Endothelial cell of umbilical vein (primary cell): ENCODE measurements at regions of chr6 and their contacts with region 1.

Region 1: GRCh38 chr6:144582939-144583613 is 297.9 kb downstream of the UTRN start:
- DNase-seq: no peak
- H3K4me3 ChIP-seq: no peak overlapping the region
- H3K27ac ChIP-seq: no peak overlapping the region
- H3K4me1 ChIP-seq: peaks cover 7% of the 10 kb centered on the region
- H3K27me3 ChIP-seq: no peaks in the 10 kb centered on the region
- CTCF ChIP-seq: no peak
- POLR2A ChIP-seq: no peak

Region 2: GRCh38 chr6:144845186-144845585 is 262.1 kb after region 1 on chr6:
- CTCF ChIA-PET with region 1: no interaction called
- POLR2A ChIA-PET with region 1: no interaction called
- dilution Hi-C with region 1: no loop called
- intact Hi-C with region 1: loop called (anchors 10 kb)
- DNase-seq: no peak
- H3K4me3 ChIP-seq: no peak overlapping the region
- H3K27ac ChIP-seq: no peak overlapping the region
- H3K4me1 ChIP-seq: no peaks in the 10 kb centered on the region
- H3K27me3 ChIP-seq: no peaks in the 10 kb centered on the region
- CTCF ChIP-seq: no peak
- POLR2A ChIP-seq: no peak

Region 3: DNA sequence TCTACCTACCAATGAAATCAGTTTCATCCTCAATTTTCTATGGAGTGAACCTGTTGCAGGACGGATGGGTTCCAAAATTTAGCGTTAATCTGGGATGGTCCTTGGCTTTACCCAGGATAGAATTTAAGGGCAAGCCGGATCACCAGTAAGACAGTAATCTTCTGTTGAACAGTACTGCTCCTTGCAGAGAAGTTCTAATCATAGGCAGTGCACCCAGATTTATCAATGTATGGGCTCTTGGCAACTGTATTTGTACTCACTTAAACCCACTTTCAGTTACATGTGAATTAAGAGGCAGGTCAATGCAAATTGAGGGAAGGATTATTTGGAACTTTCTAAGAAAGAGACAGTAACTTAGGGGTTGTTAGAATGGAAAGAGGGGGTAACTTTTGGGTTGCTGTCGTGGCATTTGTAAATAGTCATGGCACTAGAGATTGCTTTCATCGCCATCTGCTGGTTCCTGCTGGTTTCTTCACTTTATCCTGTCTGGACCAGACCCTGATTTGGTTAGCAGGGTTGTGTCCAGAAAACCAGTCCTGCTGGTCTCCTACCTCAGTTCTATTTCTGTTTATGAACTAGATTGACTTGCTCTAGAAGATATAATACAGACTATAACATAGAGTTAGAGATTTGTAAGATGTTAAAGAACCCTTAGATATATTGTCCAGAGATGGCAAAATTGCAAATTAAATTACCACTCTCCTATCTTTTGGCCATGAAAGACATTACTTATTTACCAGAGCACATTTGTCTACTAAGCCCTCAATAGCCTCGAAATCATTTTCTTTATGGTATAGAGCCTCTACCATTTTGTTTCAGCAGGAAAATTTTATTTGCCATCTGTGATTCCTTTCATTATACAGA is 348.3 kb after region 1 on chr6:
- CTCF ChIA-PET with region 1: interaction called, 15 read pairs
- POLR2A ChIA-PET with region 1: no interaction called
- dilution Hi-C with region 1: no loop called
- intact Hi-C with region 1: loop called (anchors 1 kb)
- DNase-seq: peak; percentile 34
- H3K4me3 ChIP-seq: no peak overlapping the region
- H3K27ac ChIP-seq: no peak overlapping the region
- H3K4me1 ChIP-seq: no peaks in the 10 kb centered on the region
- H3K27me3 ChIP-seq: no peaks in the 10 kb centered on the region
- CTCF ChIP-seq: peak; percentile 47 to 68
- POLR2A ChIP-seq: no peak

Region 4: DNA sequence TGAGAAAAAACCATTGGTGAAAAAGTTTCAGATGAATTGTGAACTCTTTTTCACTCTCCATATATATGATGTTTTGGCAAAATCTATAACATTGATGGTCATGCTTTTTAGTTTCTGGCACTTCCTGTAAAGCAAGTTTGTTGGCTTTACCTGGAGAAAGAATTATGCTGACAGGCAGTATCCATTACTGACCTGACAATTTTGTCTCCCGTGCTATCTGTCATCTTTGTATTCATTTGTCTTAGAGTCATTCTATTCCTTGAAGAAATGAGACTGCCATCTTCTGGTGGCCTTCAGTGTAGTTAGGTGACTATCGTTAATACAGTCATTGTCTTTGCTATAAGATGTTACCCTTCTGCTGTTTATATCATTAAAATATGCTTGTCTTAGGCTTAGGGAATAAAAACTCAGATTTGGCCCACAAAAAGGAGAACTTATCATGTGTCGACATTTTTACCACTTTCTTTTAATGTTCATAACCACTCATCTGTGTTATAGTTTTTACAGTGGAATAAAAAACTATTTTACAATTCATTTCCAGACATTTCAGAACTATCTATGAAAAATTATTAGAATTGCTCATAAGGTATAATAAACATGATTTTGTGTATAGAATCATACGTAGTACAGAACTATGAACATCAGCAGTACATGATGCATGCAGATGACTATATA is 445.2 kb after region 1 on chr6:
- CTCF ChIA-PET with region 1: interaction called, 5 read pairs
- POLR2A ChIA-PET with region 1: no interaction called
- dilution Hi-C with region 1: no loop called
- intact Hi-C with region 1: loop called (anchors 1 kb)
- DNase-seq: peak; percentile 59
- H3K4me3 ChIP-seq: no peak overlapping the region
- H3K27ac ChIP-seq: no peak overlapping the region
- H3K4me1 ChIP-seq: peaks cover 6% of the 10 kb centered on the region
- H3K27me3 ChIP-seq: no peaks in the 10 kb centered on the region
- CTCF ChIP-seq: peak; percentile 25 to 40
- POLR2A ChIP-seq: no peak

Region 5: DNA sequence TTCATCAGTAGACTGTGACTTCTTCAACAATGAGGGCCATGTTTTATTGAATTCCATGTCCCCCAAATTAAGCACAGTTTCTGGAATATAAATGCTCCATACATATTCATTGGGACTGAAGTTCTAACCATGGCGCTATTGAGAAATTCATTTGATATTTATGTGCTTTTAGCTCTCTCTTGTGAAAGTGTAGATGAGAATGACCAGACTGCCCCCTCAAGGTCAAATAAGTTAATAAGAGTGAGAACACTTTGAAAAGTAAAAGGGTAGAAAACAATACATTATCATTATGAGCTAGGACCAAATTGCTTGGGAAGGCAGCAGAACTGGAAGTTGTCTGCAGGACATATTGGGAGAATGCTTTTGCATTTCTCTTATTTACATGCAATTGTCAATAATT is 554.4 kb after region 1 on chr6:
- CTCF ChIA-PET with region 1: interaction called, 28 read pairs
- POLR2A ChIA-PET with region 1: no interaction called
- dilution Hi-C with region 1: no loop called
- intact Hi-C with region 1: loop called (anchors 10 kb)
- DNase-seq: peak; percentile 29
- H3K4me3 ChIP-seq: no peak overlapping the region
- H3K27ac ChIP-seq: no peak overlapping the region
- H3K4me1 ChIP-seq: no peaks in the 10 kb centered on the region
- H3K27me3 ChIP-seq: no peaks in the 10 kb centered on the region
- CTCF ChIP-seq: no peak
- POLR2A ChIP-seq: no peak

Region 6: DNA sequence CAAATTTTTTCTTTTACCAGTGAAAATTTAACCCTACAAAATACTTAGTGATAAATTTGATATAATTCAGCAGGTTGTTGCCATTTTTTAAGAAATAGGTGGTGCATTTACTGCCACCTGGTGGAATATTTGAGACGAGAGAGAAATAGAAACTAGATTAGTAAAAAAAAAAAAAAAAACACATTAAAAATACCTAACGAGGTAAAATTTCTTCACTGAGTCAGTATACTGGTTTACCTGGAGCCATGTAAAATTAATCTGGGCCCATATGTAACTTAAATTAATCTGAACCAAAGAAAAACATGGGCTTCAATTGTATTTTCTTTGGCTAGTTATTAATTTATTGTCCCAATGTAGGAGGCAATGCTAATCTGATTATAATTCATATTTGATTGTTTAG is 631.5 kb after region 1 on chr6:
- CTCF ChIA-PET with region 1: interaction called, 14 read pairs
- POLR2A ChIA-PET with region 1: no interaction called
- dilution Hi-C with region 1: no loop called
- intact Hi-C with region 1: loop called (anchors 2 kb)
- DNase-seq: peak; percentile 45
- H3K4me3 ChIP-seq: no peak overlapping the region
- H3K27ac ChIP-seq: no peak overlapping the region
- H3K4me1 ChIP-seq: no peaks in the 10 kb centered on the region
- H3K27me3 ChIP-seq: no peaks in the 10 kb centered on the region
- CTCF ChIP-seq: peak; percentile 18 to 27
- POLR2A ChIP-seq: no peak